Activated B cell treated with CpG ODN at 0.5 μM for 24 hours (primary cell): ENCODE measurements at regions of chr7 and their contacts with region 1.

Region 1: GRCh38 chr7:17680943-17681351 is 259.3 kb downstream of the SNX13 start:
- DNase-seq: no peak
- ATAC-seq: no peak
- H3K4me3 Mint-ChIP-seq: no peak overlapping the region
- H3K27ac Mint-ChIP-seq: no peak overlapping the region
- H3K4me1 Mint-ChIP-seq: no peaks in the 10 kb centered on the region
- H3K27me3 Mint-ChIP-seq: no peaks in the 10 kb centered on the region
- CTCF ChIP-seq: no peak

Region 2: DNA sequence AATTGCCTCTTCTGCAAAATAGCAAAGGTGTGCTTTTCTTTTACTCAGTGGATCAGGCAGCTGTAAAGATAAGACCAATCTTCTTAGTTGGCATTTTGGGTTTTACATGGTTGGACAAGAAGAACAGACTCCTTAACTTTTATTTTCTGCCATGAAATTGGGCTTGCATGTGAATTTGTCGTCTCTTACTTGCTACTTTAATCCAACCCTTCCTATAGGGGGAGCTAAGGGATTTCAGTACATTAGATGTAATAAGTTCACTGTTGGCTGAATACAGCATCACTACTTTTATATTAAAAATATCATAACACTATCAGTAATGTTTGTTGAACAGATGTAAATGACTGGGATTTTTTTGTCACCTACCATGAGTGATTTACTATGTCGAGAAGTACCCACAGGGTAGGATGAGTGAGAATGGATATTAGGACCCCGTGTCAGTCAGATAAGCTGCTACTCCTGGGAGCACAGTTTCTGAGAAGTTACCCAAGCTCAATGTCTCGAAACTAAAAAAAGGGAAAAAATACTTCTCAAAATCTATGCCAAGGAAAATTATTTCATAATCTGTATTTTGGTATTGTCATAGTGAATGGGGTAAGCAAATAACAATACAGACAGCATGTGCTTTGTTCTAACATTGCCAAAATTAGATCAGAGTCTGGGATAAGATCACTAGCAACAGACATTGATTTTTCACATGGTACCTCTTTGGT is 671.8 kb before region 1 on chr7:
- CTCF ChIA-PET with region 1: no interaction called
- POLR2A ChIA-PET with region 1: no interaction called
- intact Hi-C with region 1: loop called (anchors 1 kb)
- DNase-seq: no peak
- ATAC-seq: no peak
- H3K4me3 Mint-ChIP-seq: no peak overlapping the region
- H3K27ac Mint-ChIP-seq: no peak overlapping the region
- H3K4me1 Mint-ChIP-seq: peaks cover 6% of the 10 kb centered on the region
- H3K27me3 Mint-ChIP-seq: peaks cover 3% of the 10 kb centered on the region
- CTCF ChIP-seq: peak; percentile 29

Region 3: DNA sequence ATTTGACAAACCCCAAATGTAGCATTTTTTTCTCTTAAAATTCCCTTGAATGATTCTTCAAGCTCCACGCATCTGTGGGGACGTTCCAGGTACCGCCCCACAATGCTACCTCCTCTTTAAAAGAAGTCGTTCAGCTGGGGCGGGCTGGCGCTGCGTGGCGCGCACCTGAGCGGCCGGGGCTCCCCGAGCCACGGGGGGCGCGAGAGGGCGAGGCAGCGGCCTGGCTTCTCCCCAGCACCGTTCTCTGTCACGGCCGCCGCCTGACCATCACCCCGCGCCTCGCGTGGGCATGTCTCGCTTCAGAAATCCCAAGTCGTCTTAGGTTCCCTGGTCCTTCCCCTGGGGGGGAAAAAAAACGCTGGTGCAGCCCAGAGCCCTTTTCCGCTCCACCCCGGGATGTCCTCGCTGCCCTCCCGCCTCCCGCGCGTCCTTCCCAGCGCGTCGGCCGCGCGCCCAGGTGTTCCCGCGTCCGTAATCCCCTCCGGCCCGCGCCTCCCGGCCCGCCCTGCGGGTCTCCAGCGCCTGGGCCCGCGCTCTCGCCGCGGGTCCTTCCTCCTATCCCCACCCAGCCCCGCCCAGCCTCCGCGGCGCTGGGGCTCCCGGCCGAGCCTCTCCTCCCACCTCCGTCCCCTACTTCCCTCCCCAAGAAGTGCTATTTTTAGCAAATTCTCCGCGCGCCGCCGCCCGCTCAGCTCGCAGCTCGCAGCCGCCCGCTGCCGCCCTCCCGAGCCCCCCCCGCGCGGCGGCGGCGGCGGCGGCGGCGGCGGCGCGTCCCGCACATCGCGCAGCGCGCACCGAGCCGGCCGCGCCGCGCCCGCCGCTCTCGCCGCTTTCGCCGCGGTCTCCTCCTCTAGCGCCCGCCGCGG is 405.5 kb after region 1 on chr7:
- CTCF ChIA-PET with region 1: no interaction called
- POLR2A ChIA-PET with region 1: no interaction called
- intact Hi-C with region 1: loop called (anchors 10 kb)
- DNase-seq: peak; percentile 20
- ATAC-seq: peak; percentile 65
- H3K4me3 Mint-ChIP-seq: peak overlapping the region; percentile 81
- H3K27ac Mint-ChIP-seq: no peak overlapping the region
- H3K4me1 Mint-ChIP-seq: peaks cover 8% of the 10 kb centered on the region
- H3K27me3 Mint-ChIP-seq: peaks cover 34% of the 10 kb centered on the region
- CTCF ChIP-seq: no peak

Region 4: DNA sequence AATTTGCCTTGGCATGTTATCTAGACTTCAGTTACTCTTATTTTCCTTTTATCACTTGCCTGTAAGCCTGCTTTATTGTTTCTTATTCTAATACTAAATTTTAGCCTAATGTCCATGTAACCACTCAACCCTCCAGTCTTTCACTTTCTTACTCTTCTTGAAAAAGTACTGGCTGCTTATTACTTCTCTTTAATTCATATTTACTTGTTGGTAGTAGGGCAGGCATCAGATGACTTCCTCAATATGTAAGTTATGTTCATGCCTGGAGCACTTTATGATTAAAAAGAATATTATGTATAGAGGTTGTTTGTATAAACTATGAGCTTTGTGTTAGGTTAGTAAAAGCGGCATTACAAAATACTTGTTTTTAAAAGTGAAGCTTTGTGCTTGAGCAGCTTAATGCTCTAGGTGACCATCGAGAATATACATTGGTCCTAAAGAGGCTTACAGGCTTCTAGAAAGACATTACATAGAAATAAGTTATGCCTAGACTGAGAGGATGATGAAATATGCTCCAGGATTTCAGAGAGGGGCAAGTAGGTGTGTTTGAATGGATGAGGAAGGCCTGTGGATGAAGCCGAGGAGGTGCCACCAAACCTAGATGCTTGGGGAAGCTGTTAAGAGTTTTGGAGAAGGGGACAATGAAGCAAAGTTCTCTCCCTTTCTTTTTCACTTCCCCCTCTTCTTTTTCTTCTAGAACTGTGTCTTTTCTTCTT is 607.5 kb after region 1 on chr7:
- CTCF ChIA-PET with region 1: no interaction called
- POLR2A ChIA-PET with region 1: no interaction called
- intact Hi-C with region 1: no loop called
- DNase-seq: no peak
- ATAC-seq: no peak
- H3K4me3 Mint-ChIP-seq: peak overlapping the region; percentile 13
- H3K27ac Mint-ChIP-seq: peak overlapping the region; percentile 89
- H3K4me1 Mint-ChIP-seq: peaks cover 48% of the 10 kb centered on the region
- H3K27me3 Mint-ChIP-seq: no peaks in the 10 kb centered on the region
- CTCF ChIP-seq: no peak

Region 5: GRCh38 chr7:19051767-19052375 is 1370.9 kb after region 1 on chr7:
- CTCF ChIA-PET with region 1: interaction called, 3 read pairs
- POLR2A ChIA-PET with region 1: no interaction called
- intact Hi-C with region 1: loop called (anchors 2 kb)
- DNase-seq: no peak
- ATAC-seq: peak; percentile 66
- H3K4me3 Mint-ChIP-seq: no peak overlapping the region
- H3K27ac Mint-ChIP-seq: no peak overlapping the region
- H3K4me1 Mint-ChIP-seq: no peaks in the 10 kb centered on the region
- H3K27me3 Mint-ChIP-seq: no peaks in the 10 kb centered on the region
- CTCF ChIP-seq: peak; percentile 39